AG04449 (cell line): ENCODE measurements at regions of chr14 and their contacts with region 1.

Region 1: DNA sequence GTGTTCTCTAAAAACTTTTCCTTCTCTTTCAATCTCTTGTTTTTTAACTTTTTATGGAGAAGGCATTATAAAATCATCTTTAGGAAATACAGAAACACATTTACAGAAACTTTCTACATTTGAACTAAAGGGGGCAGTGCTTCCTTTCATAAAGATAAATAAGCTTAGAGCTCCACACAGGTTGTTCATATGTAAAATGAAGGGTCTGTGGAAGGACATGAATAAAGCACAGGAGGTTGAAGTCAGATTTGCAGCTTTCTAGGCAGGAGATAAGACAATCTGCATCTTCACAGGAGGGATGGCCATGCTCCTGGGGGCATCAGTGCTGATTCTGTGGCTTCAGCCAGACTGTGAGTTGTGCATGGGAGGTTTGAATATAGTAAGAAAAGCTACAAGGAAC is 426.0 kb downstream of the DAD1 start:
- DNase-seq: no peak
- H3K4me3 ChIP-seq: no peak overlapping the region
- CTCF ChIP-seq: no peak

Region 2: DNA sequence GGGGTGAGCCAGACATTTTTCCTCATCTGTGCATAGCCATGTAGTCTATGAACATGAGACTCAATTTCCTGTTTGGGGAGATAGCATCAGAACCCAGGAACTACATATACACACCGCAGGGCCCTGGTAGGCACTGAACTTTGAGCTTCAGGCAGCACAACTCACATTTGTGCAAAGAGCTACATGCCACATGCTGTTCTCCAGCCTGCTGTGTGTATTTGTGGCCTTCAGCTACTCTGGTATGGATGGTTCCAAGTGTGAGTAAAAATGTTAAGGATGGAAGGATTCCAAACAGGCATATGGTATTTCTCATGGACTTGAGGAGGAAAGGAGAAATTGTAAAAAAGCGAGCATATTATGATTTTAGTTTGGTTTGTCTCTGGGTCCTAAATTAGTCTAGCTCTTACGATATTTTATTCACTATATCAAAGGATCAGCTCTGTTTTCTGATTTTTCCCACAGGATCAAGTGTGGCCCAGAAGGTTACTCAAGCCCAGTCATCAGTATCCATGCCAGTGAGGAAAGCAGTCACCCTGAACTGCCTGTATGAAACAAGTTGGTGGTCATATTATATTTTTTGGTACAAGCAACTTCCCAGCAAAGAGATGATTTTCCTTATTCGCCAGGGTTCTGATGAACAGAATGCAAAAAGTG is 67.1 kb before region 1 on chr14:
- CTCF ChIA-PET with region 1: no interaction called
- POLR2A ChIA-PET with region 1: no interaction called
- DNase-seq: no peak
- H3K4me3 ChIP-seq: no peak overlapping the region
- CTCF ChIP-seq: no peak

Region 3: GRCh38 chr14:22177870-22178269 is 14.8 kb after region 1 on chr14:
- CTCF ChIA-PET with region 1: interaction called, 22 read pairs
- POLR2A ChIA-PET with region 1: no interaction called
- DNase-seq: no peak
- H3K4me3 ChIP-seq: no peak overlapping the region
- CTCF ChIP-seq: no peak

Region 4: DNA sequence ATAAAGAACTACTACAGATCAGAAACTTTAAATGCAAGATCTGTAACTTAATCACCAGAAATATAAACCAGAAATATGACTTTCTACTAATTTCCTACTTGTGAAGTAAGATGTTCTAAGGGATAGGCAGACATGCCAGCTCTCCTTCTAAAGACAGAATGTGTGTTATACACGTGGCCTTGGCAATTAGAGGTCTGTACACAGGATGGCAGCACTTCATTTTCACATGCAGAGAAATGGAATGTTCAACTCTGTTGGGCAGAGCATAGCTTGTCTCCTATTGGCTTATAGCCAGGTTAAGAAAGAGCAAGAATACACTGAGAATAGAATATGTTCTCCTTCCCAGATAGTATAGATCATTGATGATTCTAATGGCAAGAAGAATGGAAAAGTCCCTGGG is 22.1 kb after region 1 on chr14:
- CTCF ChIA-PET with region 1: interaction called, 22 read pairs
- POLR2A ChIA-PET with region 1: no interaction called
- DNase-seq: no peak
- H3K4me3 ChIP-seq: no peak overlapping the region
- CTCF ChIP-seq: no peak

Region 5: DNA sequence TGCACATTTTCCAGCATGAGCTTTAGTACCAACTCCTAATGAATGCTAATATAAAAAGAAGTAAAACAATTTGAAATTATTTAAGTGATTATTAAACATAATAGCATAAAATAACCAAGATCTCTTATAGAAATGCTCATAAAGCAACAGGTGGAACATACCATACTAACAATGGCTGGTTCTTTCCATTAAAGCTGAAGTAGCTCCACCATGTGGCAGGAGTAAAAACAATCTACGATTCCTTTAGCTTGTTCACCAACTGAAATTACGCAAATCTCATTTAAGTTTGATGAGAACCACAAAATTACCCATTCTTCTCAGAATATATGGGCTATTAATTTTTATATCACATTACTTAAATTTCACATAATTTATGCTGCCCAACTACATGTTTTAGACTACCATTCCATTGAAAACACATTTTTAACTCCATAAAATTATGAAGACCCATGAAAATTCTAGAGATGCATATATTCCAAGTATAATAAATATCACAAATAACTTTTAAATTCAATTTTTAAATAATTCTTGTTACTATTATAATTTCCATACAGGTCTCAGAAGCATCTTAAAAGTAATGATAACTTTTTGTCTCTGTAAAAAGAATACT is 212.4 kb after region 1 on chr14:
- CTCF ChIA-PET with region 1: interaction called, 14 read pairs
- POLR2A ChIA-PET with region 1: no interaction called
- DNase-seq: no peak
- H3K4me3 ChIP-seq: no peak overlapping the region
- CTCF ChIP-seq: peak; percentile 39

Region 6: DNA sequence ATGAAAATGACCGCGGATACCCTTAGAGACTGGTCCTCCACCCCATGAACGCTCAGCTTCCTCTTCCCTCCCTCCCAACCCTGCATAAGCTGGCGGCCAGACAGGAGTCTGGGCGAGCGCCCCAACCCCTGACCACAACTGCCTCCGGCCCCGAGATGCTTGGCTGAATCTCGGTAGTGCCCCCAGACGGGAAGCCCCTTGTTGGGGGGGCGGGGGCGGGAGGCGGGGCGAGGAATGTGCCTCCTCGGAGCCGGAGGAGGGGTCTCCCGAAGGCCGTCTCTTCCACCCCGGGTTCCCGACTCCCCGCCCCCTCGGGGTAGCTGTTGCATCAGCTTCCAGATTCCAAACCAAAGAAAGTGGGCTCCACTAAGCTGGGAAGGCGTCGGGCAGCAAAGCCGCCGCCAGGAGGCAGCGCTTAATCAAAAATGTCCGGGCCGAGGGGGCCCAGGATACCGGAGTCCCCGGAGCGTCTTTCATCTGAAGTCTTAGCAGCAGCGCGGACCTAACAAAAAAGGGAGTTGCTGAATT is 659.6 kb after region 1 on chr14:
- CTCF ChIA-PET with region 1: no interaction called
- POLR2A ChIA-PET with region 1: no interaction called
- DNase-seq: no peak
- H3K4me3 ChIP-seq: peak overlapping the region; percentile 24
- CTCF ChIP-seq: peak; percentile 78